ENCODE measurements at regions of chr3 and their contacts with region 1.

Region 1: GRCh38 chr3:140128631-140129030 is 193.6 kb downstream of the CLSTN2 start:
- DNase-seq: peak; percentile 41
- ATAC-seq: peak; percentile 51
- H3K4me3 Mint-ChIP-seq: no peak overlapping the region
- H3K27ac Mint-ChIP-seq: no peak overlapping the region
- H3K4me1 Mint-ChIP-seq: no peaks in the 10 kb centered on the region
- H3K27me3 Mint-ChIP-seq: peaks cover 3% of the 10 kb centered on the region
- CTCF ChIP-seq: no peak

Region 2: GRCh38 chr3:140143367-140144069 is 14.9 kb after region 1 on chr3:
- CTCF ChIA-PET with region 1: interaction called, 14 read pairs
- POLR2A ChIA-PET with region 1: no interaction called
- intact Hi-C with region 1: no loop called
- DNase-seq: no peak
- ATAC-seq: no peak
- H3K4me3 Mint-ChIP-seq: no peak overlapping the region
- H3K27ac Mint-ChIP-seq: no peak overlapping the region
- H3K4me1 Mint-ChIP-seq: no peaks in the 10 kb centered on the region
- H3K27me3 Mint-ChIP-seq: no peaks in the 10 kb centered on the region
- CTCF ChIP-seq: no peak